HEK293 (cell line): ENCODE measurements at regions of chr11 and their contacts with region 1.

Region 1: GRCh38 chr11:75802913-75803820 is 11.8 kb upstream of the UVRAG start:
- H3K4me3 ChIP-seq: no peak overlapping the region
- H3K27ac ChIP-seq: no peak overlapping the region
- H3K4me1 ChIP-seq: no peaks in the 10 kb centered on the region
- CTCF ChIP-seq: peak; percentile 53

Region 2: DNA sequence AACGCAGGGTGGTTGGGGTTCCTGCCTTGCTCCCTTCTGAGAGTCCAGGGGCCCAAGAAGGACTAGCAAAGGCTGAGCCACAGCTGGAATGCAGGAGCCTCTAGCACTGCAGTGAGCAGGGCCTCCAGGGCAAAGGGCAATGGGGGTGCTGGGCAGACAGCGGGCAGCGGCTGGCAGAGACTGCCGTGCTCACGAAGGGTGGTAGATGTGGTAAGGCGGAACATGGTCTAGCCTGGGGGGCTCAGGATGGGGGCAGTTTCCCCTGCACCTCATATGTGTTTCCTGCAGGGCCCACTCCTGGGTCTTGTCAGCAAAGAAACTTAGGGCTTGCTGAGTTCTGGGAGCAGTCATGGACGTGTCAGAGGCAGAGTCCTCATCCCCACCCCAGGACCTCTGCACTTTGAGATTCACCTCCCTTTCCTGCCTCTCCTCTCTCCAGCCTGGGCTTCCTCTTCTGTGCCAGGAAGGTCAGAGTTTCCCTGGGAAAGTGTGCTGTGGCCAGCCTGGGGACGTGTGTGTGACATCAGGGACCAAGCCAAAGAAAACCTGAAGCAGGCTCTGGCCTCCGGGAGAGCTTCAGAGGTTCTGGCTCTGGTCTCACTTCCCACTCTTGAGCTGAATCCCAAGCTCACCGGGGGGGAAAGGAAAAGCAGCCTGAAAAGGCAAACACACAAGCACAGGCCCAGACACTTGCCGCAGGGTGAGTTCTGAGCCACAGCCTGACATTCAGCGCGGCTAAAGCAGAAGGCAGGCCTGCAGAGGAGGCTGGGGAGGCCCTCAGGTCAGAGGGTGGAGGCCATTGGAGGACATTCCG is 81.1 kb before region 1 on chr11:
- CTCF ChIA-PET with region 1: interaction called, 11 read pairs
- POLR2A ChIA-PET with region 1: no interaction called
- H3K4me3 ChIP-seq: no peak overlapping the region
- H3K27ac ChIP-seq: no peak overlapping the region
- H3K4me1 ChIP-seq: no peaks in the 10 kb centered on the region
- CTCF ChIP-seq: no peak

Region 3: GRCh38 chr11:75782540-75783263 is 20.5 kb before region 1 on chr11:
- CTCF ChIA-PET with region 1: no interaction called
- POLR2A ChIA-PET with region 1: no interaction called
- H3K4me3 ChIP-seq: no peak overlapping the region
- H3K27ac ChIP-seq: no peak overlapping the region
- H3K4me1 ChIP-seq: no peaks in the 10 kb centered on the region
- CTCF ChIP-seq: no peak

Region 4: DNA sequence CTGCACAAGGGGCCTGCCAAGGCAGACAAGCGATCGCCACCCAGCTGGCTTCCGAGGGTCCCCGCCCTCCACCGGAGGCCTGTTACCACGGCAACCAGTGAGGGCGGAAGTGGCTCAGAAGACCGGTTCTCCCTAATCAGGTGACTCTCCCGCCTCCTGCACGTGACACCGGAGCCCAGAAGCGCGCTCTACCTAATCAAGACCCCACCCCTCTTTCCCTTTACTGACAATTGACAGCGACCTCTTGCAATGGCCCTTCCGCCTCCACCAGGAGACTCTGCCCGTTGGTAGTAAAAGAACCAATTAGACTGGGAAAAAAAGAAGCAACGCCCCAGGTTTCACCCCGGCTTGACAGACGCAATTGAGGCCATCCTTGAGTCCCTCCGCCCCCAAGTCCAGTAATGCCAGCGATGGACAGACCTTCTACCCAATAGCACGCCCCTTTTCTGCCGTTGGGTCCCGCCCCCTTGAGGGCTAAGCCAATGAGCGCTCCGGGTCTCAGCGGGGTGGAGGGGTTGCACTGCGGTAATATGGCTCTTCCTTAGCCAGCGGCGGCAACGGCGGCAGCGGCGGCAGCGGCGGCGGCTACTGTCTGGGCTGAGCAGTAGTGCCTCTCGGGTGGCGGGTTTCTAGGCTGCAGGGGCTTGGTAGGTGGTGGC is 11.6 kb after region 1 on chr11 and contains the start of gene UVRAG:
- CTCF ChIA-PET with region 1: interaction called, 14 read pairs
- POLR2A ChIA-PET with region 1: interaction called, 3 read pairs
- H3K4me3 ChIP-seq: peak within 1 kb of the TSS; percentile 90
- H3K27ac ChIP-seq: peak within 1 kb of the TSS; percentile 67
- H3K4me1 ChIP-seq: no peaks in the 10 kb centered on the region
- CTCF ChIP-seq: no peak

Region 5: GRCh38 chr11:76318744-76319384 is 515.7 kb after region 1 on chr11:
- CTCF ChIA-PET with region 1: interaction called, 16 read pairs
- POLR2A ChIA-PET with region 1: no interaction called
- H3K4me3 ChIP-seq: no peak overlapping the region
- H3K27ac ChIP-seq: no peak overlapping the region
- H3K4me1 ChIP-seq: no peaks in the 10 kb centered on the region
- CTCF ChIP-seq: peak; percentile 57